ENCODE measurements at regions of chr18 and their contacts with region 1.

Region 1: DNA sequence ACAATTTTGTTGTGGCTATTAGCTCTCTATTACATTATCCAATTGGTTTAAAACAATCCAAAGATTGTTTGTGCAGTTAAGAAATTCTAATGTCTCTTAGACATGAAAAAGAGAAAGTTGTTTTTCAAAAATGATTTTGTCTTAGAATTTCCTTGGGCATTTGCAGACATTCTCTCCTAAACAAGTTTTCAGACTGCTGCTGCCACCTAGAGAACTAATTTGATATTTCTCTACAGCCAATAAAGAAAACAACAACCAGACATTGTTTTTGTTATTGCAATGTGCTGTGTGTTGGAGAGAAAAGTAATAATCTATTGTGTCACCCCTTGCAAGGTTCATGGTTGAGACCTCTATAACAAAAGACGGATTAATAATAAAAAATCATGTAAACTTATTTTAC is 119.0 kb upstream of the SYT4 start:
- DNase-seq: no peak
- H3K4me3 ChIP-seq: no peak overlapping the region
- H3K27ac ChIP-seq: no peak overlapping the region
- H3K4me1 ChIP-seq: peaks cover 6% of the 10 kb centered on the region
- H3K27me3 ChIP-seq: peaks cover 3% of the 10 kb centered on the region
- CTCF ChIP-seq: peak; percentile 53 to 62

Region 2: GRCh38 chr18:43277164-43277600 is 119.1 kb before region 1 on chr18 and contains the start of gene SYT4:
- CTCF ChIA-PET with region 1: no interaction called
- dilution Hi-C with region 1: no loop called
- in situ Hi-C with region 1: no loop called
- intact Hi-C with region 1: loop called (anchors 5 kb)
- DNase-seq: peak; percentile 42
- H3K4me3 ChIP-seq: no peak within 1 kb of the TSS
- H3K27ac ChIP-seq: no peak within 1 kb of the TSS
- H3K4me1 ChIP-seq: no peaks in the 10 kb centered on the region
- H3K27me3 ChIP-seq: peaks cover 5% of the 10 kb centered on the region
- CTCF ChIP-seq: no peak
- total RNA-seq, gene SYT4: not detected

Measured in mammary epithelial cell (primary cell).